ENCODE measurements at regions of chr20 and their contacts with region 1.

Region 1: GRCh38 chr20:47544240-47544639 is 42.6 kb downstream of the NCOA3 start:
- H3K4me3 ChIP-seq: no peak overlapping the region
- H3K27ac ChIP-seq: no peak overlapping the region
- H3K4me1 ChIP-seq: peaks cover 22% of the 10 kb centered on the region
- CTCF ChIP-seq: no peak

Region 2: GRCh38 chr20:47479506-47479905 is 64.7 kb before region 1 on chr20:
- CTCF ChIA-PET with region 1: no interaction called
- POLR2A ChIA-PET with region 1: no interaction called
- H3K4me3 ChIP-seq: no peak overlapping the region
- H3K27ac ChIP-seq: no peak overlapping the region
- H3K4me1 ChIP-seq: no peaks in the 10 kb centered on the region
- CTCF ChIP-seq: no peak

Region 3: GRCh38 chr20:47521059-47521808 is 23.0 kb before region 1 on chr20:
- CTCF ChIA-PET with region 1: no interaction called
- POLR2A ChIA-PET with region 1: no interaction called
- H3K4me3 ChIP-seq: no peak overlapping the region
- H3K27ac ChIP-seq: no peak overlapping the region
- H3K4me1 ChIP-seq: no peaks in the 10 kb centered on the region
- CTCF ChIP-seq: no peak

Region 4: DNA sequence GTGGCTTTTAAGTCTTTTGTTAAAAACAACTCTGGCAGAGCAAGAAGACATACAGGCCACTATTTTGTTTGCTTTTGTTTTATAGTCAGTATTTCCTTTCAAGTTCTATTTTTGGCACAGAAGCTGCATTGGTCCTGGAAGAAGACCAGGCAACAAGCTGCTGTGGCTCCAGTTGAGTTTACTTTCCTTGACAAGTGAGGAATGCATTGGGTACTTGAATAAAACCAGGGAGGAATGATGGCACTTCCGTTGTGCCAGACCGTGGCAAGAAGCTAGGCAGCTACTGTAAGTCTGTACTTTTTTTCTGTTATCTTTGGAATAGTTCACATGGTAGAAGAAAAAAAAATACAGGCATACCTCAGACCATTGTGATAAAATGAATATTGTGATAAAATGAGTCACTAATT is 23.8 kb after region 1 on chr20:
- CTCF ChIA-PET with region 1: interaction called, 10 read pairs
- POLR2A ChIA-PET with region 1: no interaction called
- H3K4me3 ChIP-seq: no peak overlapping the region
- H3K27ac ChIP-seq: peak overlapping the region; percentile 5; the same call in 1 of the 2 replicates
- H3K4me1 ChIP-seq: peaks cover 2% of the 10 kb centered on the region
- CTCF ChIP-seq: no peak

Measured in HEK293 (cell line).